ENCODE measurements at regions of chr3 and their contacts with region 1.

Region 1: DNA sequence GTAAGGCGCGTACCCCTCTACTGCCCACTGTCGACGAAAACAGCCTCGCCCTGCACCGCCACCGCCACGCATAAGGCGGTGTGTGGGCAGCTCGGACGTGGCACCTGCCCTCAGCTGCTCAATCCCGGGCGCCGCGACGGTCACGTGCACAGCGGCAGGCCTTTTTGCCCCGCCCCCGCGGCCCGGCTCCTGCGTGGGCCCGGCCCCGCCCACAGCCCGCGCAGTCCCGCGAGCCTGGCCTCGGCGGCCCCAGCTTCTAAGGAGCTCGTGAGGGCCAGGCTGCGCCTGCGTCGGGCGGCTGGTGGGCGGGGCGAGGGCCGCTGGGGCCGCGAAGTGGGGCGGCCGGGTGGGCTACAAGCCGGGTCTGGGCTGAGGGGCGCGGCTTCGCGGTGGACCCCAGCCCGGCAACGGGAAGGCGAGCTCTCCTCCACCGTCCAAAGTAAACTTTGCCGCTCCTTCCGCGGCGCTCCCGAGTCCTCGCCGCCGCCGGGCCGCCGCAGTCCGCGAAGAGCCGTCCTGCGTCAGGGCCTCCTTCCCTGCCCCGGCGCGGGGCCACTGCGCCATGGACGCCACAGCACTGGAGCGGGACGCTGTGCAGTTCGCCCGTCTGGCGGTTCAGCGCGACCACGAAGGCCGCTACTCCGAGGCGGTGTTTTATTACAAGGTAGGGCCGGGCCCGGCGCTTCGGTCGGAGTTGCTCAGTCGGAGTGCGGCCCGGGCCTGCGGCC is at the start of gene CAPN7:
- DNase-seq: peak; percentile 88 to 98 (median 93)
- ATAC-seq: peak; percentile 91
- H3K4me3 ChIP-seq: peak within 1 kb of the TSS; percentile 79 to 82
- H3K4me3 Mint-ChIP-seq: peak within 1 kb of the TSS; percentile 89
- H3K27ac ChIP-seq: peak within 1 kb of the TSS; percentile 85 to 88
- H3K27ac Mint-ChIP-seq: peak within 1 kb of the TSS; percentile 87
- H3K4me1 ChIP-seq: peaks cover 21% of the 10 kb centered on the region
- H3K4me1 Mint-ChIP-seq: peaks cover 32% of the 10 kb centered on the region
- H3K27me3 ChIP-seq: no peaks in the 10 kb centered on the region
- H3K27me3 Mint-ChIP-seq: no peaks in the 10 kb centered on the region
- CTCF ChIP-seq: no peak
- total RNA-seq, gene CAPN7: 59.7 to 62.6 TPM

Region 2: DNA sequence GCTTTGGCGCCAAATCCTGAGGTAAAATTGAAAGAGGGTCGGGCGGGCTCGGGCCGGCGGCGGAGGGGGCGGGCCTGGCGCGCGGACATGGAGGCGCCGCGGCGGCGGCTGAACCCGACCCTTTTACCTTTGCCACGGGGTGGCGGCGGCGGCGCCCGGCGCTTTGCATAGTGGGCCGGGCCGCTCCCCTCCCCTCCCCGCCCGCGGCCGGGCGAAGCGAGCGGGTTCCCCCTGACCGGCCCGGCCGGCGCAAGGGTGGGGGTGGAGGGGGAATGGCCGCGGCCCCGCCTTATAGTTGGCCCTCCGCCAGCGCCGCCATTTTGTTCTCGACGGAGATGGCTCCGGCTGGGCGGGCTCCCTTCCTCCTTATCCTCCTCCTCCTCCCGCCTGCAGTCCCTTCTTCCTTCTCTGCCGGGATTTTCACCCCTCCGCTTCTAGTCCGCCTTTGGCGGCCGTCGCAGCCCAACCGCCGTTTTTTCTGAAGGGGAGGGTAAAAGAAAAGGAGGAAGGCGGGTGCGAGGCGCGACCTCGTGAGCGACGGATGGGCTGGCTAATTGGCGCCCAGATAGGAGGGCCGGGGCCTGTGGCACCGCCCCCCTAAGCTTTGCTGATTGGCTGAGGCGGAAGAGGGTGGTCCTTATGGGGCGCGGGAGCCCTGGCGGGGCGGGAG is 258.1 kb before region 1 on chr3:
- CTCF ChIA-PET with region 1: no interaction called
- POLR2A ChIA-PET with region 1: no interaction called
- intact Hi-C with region 1: loop called (anchors 1 to 5 kb)
- DNase-seq: peak; percentile 92 to 98 (median 95)
- ATAC-seq: peak; percentile 88
- H3K4me3 ChIP-seq: peak overlapping the region; percentile 98 to 99
- H3K4me3 Mint-ChIP-seq: peak overlapping the region; percentile 99
- H3K27ac ChIP-seq: peak overlapping the region; percentile 97 to 99
- H3K27ac Mint-ChIP-seq: peak overlapping the region; percentile 100
- H3K4me1 ChIP-seq: peaks cover 22% of the 10 kb centered on the region
- H3K4me1 Mint-ChIP-seq: peaks cover 70% of the 10 kb centered on the region
- H3K27me3 ChIP-seq: no peaks in the 10 kb centered on the region
- H3K27me3 Mint-ChIP-seq: no peaks in the 10 kb centered on the region
- CTCF ChIP-seq: no peak

Region 3: GRCh38 chr3:15332405-15333098 is 126.5 kb after region 1 on chr3 and contains the start of gene SH3BP5:
- CTCF ChIA-PET with region 1: interaction called, 8 read pairs
- POLR2A ChIA-PET with region 1: interaction called, 7 read pairs
- intact Hi-C with region 1: loop called (anchors 5 kb)
- DNase-seq: peak; percentile 46 to 86 (median 75)
- ATAC-seq: peak; percentile 91
- H3K4me3 ChIP-seq: peak within 1 kb of the TSS; percentile 93 to 97
- H3K4me3 Mint-ChIP-seq: peak within 1 kb of the TSS; percentile 91
- H3K27ac ChIP-seq: peak within 1 kb of the TSS; percentile 60 to 67
- H3K27ac Mint-ChIP-seq: peak within 1 kb of the TSS; percentile 90
- H3K4me1 ChIP-seq: peaks cover 37% of the 10 kb centered on the region
- H3K4me1 Mint-ChIP-seq: peaks cover 50% of the 10 kb centered on the region
- H3K27me3 ChIP-seq: no peaks in the 10 kb centered on the region
- H3K27me3 Mint-ChIP-seq: no peaks in the 10 kb centered on the region
- CTCF ChIP-seq: peak; percentile 76
- total RNA-seq, gene SH3BP5: 4.4 to 5.9 TPM

Region 4: GRCh38 chr3:15405448-15406050 is 199.5 kb after region 1 on chr3:
- CTCF ChIA-PET with region 1: interaction called, 69 read pairs
- POLR2A ChIA-PET with region 1: interaction called, 3 read pairs
- intact Hi-C with region 1: loop called (anchors 1 kb)
- DNase-seq: peak in 3 of 9 experiments; percentile 22 to 77 (median 69)
- ATAC-seq: peak; percentile 73
- H3K4me3 ChIP-seq: no peak overlapping the region
- H3K4me3 Mint-ChIP-seq: no peak overlapping the region
- H3K27ac ChIP-seq: no peak overlapping the region
- H3K27ac Mint-ChIP-seq: no peak overlapping the region
- H3K4me1 ChIP-seq: no peaks in the 10 kb centered on the region
- H3K4me1 Mint-ChIP-seq: peaks cover 4% of the 10 kb centered on the region
- H3K27me3 ChIP-seq: no peaks in the 10 kb centered on the region
- H3K27me3 Mint-ChIP-seq: no peaks in the 10 kb centered on the region
- CTCF ChIP-seq: peak; percentile 61

Region 5: DNA sequence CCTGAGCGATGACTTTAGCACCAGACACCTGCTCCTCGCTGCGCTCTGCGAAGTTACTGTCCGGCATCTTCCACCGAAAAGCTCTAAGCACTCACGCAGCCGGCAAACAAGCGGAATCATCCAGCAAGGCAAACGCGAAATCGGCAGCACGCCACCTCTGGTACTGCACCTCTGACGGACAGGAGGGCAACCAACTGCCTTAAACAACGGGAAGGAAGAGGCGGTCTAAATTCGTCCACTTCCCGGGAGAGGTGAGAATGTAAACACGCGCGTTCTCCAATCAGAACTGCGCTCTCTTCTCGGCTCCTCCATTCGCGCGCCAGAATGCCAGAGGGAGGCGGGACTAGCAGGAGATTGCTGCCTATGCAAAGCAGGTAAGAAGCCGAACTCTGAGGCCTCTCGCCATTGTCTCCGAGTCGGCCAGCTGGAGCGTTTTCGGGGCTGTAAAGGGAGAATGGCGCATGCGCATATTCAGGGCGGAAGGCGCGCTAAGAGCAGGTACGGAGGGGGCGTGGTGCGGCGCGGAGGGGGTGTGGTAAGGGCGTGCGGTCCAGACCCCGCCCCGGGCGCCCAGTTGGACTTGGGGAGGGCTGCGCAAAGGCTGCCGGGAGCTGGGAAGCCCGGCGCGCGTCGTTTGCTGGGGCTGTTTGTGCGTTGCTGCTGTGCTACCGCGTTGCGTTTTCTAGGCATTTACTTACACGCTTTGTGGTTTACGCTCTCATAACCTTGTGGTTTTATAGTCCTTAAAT is 395.5 kb after region 1 on chr3 and contains the starts of genes BTD and HACL1:
- CTCF ChIA-PET with region 1: interaction called, 6 read pairs
- POLR2A ChIA-PET with region 1: interaction called, 13 read pairs
- intact Hi-C with region 1: loop called (anchors 2 to 5 kb)
- DNase-seq: peak; percentile 96 to 100 (median 99)
- ATAC-seq: peak; percentile 89
- H3K4me3 ChIP-seq: peak within 1 kb of the TSS; percentile 82 to 94
- H3K4me3 Mint-ChIP-seq: peak within 1 kb of the TSS; percentile 100
- H3K27ac ChIP-seq: peak within 1 kb of the TSS; percentile 82 to 88
- H3K27ac Mint-ChIP-seq: peak within 1 kb of the TSS; percentile 99
- H3K4me1 ChIP-seq: peaks cover 19% of the 10 kb centered on the region
- H3K4me1 Mint-ChIP-seq: peaks cover 54% of the 10 kb centered on the region
- H3K27me3 ChIP-seq: no peaks in the 10 kb centered on the region
- H3K27me3 Mint-ChIP-seq: no peaks in the 10 kb centered on the region
- CTCF ChIP-seq: peak; percentile 24
- total RNA-seq, gene BTD: 9.1 to 11.3 TPM
- total RNA-seq, gene HACL1: 30.1 to 33.4 TPM

Region 6: GRCh38 chr3:15753056-15753710 is 547.1 kb after region 1 on chr3:
- CTCF ChIA-PET with region 1: no interaction called
- POLR2A ChIA-PET with region 1: no interaction called
- intact Hi-C with region 1: no loop called
- DNase-seq: no peak
- ATAC-seq: no peak
- H3K4me3 ChIP-seq: no peak overlapping the region
- H3K4me3 Mint-ChIP-seq: no peak overlapping the region
- H3K27ac ChIP-seq: no peak overlapping the region
- H3K27ac Mint-ChIP-seq: no peak overlapping the region
- H3K4me1 ChIP-seq: no peaks in the 10 kb centered on the region
- H3K4me1 Mint-ChIP-seq: peaks cover 6% of the 10 kb centered on the region
- H3K27me3 ChIP-seq: no peaks in the 10 kb centered on the region
- H3K27me3 Mint-ChIP-seq: no peaks in the 10 kb centered on the region
- CTCF ChIP-seq: no peak

Region 7: DNA sequence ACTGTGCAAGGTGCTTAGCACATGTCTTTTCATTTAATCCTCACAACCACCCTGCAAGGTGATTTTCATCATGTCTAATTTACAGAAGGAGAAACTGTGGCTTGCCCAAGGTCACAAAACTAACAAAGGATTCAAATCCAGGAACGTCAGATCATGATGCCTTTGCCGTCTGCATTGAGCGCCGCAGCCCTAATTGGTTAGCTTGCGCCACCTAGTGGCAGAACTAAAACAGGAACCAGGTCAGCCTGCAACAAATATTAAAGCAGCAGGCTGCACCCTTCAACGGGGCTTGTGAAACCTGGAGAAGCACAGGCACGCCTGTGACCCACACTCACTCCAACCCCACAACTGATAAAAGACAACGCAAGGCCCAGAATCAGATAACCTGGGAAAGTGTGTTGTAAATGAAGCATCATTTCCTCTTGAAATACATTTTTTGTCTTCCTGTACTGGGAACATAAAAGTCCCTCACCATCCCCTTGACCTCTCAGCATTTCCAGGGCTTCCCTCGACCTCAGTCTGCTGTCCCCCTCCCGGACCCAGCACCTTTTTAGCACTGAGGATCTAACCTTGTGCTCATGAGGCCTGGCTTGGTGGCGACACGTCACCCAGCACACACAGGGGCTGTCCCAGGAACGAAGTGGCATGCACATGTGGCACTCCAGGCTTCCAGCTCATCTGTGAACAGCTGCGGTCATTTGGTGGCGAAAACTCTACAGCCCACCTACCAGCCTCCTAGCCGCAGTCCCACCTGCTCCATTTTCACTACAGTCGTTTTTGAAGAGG is 1041.4 kb after region 1 on chr3:
- CTCF ChIA-PET with region 1: interaction called, 10 read pairs
- POLR2A ChIA-PET with region 1: no interaction called
- intact Hi-C with region 1: loop called in 1 of 2 experiments (anchors 2 kb)
- DNase-seq: peak; percentile 54 to 86 (median 76)
- ATAC-seq: peak; percentile 90
- H3K4me3 ChIP-seq: no peak overlapping the region
- H3K4me3 Mint-ChIP-seq: no peak overlapping the region
- H3K27ac ChIP-seq: no peak overlapping the region
- H3K27ac Mint-ChIP-seq: no peak overlapping the region
- H3K4me1 ChIP-seq: no peaks in the 10 kb centered on the region
- H3K4me1 Mint-ChIP-seq: peaks cover 7% of the 10 kb centered on the region
- H3K27me3 ChIP-seq: no peaks in the 10 kb centered on the region
- H3K27me3 Mint-ChIP-seq: peaks cover 4% of the 10 kb centered on the region
- CTCF ChIP-seq: peak; percentile 79